ENCODE measurements at regions of chr5 and their contacts with region 1.

Region 1: GRCh38 chr5:67003935-67004729 is 192.5 kb downstream of the CD180 start:
- DNase-seq: peak; percentile 88
- ATAC-seq: peak; percentile 72
- H3K4me3 ChIP-seq: peak overlapping the region; percentile 91
- H3K27ac ChIP-seq: peak overlapping the region; percentile 90
- H3K4me1 ChIP-seq: peaks cover 61% of the 10 kb centered on the region
- H3K27me3 ChIP-seq: no peaks in the 10 kb centered on the region
- CTCF ChIP-seq: no peak

Region 2: GRCh38 chr5:66788556-66788955 is 215.6 kb before region 1 on chr5:
- CTCF ChIA-PET with region 1: no interaction called
- POLR2A ChIA-PET with region 1: no interaction called
- intact Hi-C with region 1: no loop called
- DNase-seq: no peak
- ATAC-seq: no peak
- H3K4me3 ChIP-seq: no peak overlapping the region
- H3K27ac ChIP-seq: no peak overlapping the region
- H3K4me1 ChIP-seq: no peaks in the 10 kb centered on the region
- H3K27me3 ChIP-seq: no peaks in the 10 kb centered on the region
- CTCF ChIP-seq: no peak

Region 3: DNA sequence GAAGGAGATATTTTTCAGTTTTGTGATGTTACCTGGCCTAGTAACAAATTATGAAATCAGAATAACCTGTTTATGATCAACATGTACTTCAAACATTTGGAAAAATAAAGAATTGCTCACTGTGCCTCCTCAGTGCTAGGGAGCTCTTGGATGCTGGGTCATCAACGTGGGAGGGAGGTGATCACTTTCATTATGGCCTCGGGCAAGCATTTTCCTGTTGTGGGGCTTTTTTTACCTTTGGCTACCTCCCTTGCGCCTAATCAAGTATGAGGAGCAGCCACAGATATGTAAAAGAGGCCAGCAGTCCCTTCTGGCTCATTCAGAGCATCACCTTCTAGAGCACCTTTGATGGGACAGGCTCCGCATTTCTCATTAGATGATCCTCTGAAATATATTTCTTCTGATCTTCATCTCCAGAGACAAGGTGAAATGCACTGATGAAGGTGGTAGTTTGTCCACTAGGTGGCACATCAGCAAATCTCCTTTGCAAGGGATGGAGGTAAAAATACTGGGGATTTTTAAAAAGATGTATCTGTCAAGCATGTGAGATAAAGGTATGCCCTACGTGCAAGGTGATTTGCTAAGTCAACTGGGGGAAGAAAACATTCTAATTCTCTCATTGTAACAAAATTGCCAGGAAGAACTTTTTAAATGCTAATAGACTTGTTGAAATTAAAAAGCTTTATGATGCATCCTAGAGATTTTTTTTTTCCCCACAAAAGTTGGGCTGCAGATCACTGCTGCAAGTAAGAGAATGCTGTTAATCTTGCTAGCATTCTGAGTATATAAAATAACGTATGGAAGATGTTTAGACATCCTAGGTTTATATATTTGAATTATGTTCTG is 189.8 kb before region 1 on chr5:
- CTCF ChIA-PET with region 1: no interaction called
- POLR2A ChIA-PET with region 1: no interaction called
- intact Hi-C with region 1: loop called (anchors 10 kb)
- DNase-seq: peak; percentile 49
- ATAC-seq: peak; percentile 53; the same call in 1 of the 2 replicates
- H3K4me3 ChIP-seq: no peak overlapping the region
- H3K27ac ChIP-seq: no peak overlapping the region
- H3K4me1 ChIP-seq: no peaks in the 10 kb centered on the region
- H3K27me3 ChIP-seq: no peaks in the 10 kb centered on the region
- CTCF ChIP-seq: peak; percentile 58

Region 4: GRCh38 chr5:66958980-66959641 is 45.0 kb before region 1 on chr5:
- CTCF ChIA-PET with region 1: no interaction called
- POLR2A ChIA-PET with region 1: no interaction called
- intact Hi-C with region 1: loop called (anchors 5 kb)
- DNase-seq: peak; percentile 45
- ATAC-seq: peak; percentile 54
- H3K4me3 ChIP-seq: peak overlapping the region; percentile 60
- H3K27ac ChIP-seq: peak overlapping the region; percentile 55
- H3K4me1 ChIP-seq: peaks cover 47% of the 10 kb centered on the region
- H3K27me3 ChIP-seq: no peaks in the 10 kb centered on the region
- CTCF ChIP-seq: no peak

Region 5: GRCh38 chr5:67095346-67096171 is 91.4 kb after region 1 on chr5:
- CTCF ChIA-PET with region 1: no interaction called
- POLR2A ChIA-PET with region 1: interaction called, 3 read pairs
- intact Hi-C with region 1: loop called (anchors 5 kb)
- DNase-seq: no peak
- ATAC-seq: no peak
- H3K4me3 ChIP-seq: no peak overlapping the region
- H3K27ac ChIP-seq: no peak overlapping the region
- H3K4me1 ChIP-seq: 0 out of 2 replicates have a peak, but pooled peaks cover 5% of the 10 kb centered on the region
- H3K27me3 ChIP-seq: no peaks in the 10 kb centered on the region
- CTCF ChIP-seq: no peak

Region 6: GRCh38 chr5:67149951-67150523 is 145.9 kb after region 1 on chr5:
- CTCF ChIA-PET with region 1: no interaction called
- POLR2A ChIA-PET with region 1: no interaction called
- intact Hi-C with region 1: loop called (anchors 2 kb)
- DNase-seq: peak; percentile 58
- ATAC-seq: no peak
- H3K4me3 ChIP-seq: no peak overlapping the region
- H3K27ac ChIP-seq: no peak overlapping the region
- H3K4me1 ChIP-seq: no peaks in the 10 kb centered on the region
- H3K27me3 ChIP-seq: no peaks in the 10 kb centered on the region
- CTCF ChIP-seq: peak; percentile 71

Region 7: GRCh38 chr5:67209142-67209771 is 205.1 kb after region 1 on chr5:
- CTCF ChIA-PET with region 1: no interaction called
- POLR2A ChIA-PET with region 1: no interaction called
- intact Hi-C with region 1: loop called (anchors 2 kb)
- DNase-seq: peak; percentile 85
- ATAC-seq: peak; percentile 47
- H3K4me3 ChIP-seq: no peak overlapping the region
- H3K27ac ChIP-seq: no peak overlapping the region
- H3K4me1 ChIP-seq: peaks cover 53% of the 10 kb centered on the region
- H3K27me3 ChIP-seq: no peaks in the 10 kb centered on the region
- CTCF ChIP-seq: peak; percentile 68

Measured in PC-3 (cell line).